H1 (cell line): ENCODE measurements at regions of chr14 and their contacts with region 1.

Region 1: GRCh38 chr14:58637391-58638230 is at the start of gene DACT1:
- DNase-seq: peak in 1 of 2 experiments; percentile 78
- H3K4me3 ChIP-seq: peak within 1 kb of the TSS; percentile 56 to 73 (median 64)
- H3K27ac ChIP-seq: no peak within 1 kb of the TSS
- H3K4me1 ChIP-seq: peaks cover 4 to 21% (median 13%) of the 10 kb centered on the region in 4 experiments
- H3K27me3 ChIP-seq: peaks cover 8 to 35% (median 22%) of the 10 kb centered on the region in 4 experiments; a peak in 6 of 7 replicates
- CTCF ChIP-seq: 0 out of 4 replicates have a peak, but pooled peaks of 1 of the 3 experiments have one; percentile 2
- EP300 ChIP-seq: no peak
- POLR2A ChIP-seq: no peak; a peak in 1 of 3 replicates
- RAD21 ChIP-seq: 0 out of 4 replicates have a peak, but pooled peaks of 1 of the 2 experiments have one; percentile 2
- total RNA-seq, gene DACT1: 26.2 and 29.8 TPM in 2 replicates

Region 2: DNA sequence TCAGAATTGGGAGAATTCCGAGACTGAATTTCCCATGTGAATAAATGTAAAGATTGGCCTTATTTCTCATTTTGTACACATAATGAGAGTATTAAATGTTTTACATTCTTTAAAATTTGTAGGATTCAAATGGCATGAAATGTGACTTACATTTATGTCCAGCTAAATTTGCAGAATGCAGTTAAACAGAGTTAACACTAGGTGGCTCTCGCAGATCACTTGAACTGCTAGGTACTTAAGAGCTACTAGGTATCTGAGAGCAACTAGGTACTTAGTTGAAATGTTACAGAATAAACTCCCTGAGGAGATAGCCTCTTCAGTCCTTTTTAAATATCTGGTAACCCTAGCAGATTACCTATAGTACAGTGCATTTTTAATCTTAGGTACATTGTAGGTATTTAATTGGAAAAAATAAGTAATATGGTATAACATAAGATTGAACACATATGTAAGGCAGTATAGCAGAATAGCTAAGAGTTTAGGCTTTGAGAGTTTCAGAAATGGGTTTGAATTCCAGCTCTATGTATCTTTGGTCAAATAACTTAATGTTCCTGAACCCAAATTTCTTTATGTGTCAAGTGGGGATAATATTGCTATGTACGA is 136.3 kb before region 1 on chr14:
- CTCF ChIA-PET with region 1: interaction called, 31 read pairs
- POLR2A ChIA-PET with region 1: no interaction called
- DNase-seq: no peak
- H3K4me3 ChIP-seq: no peak overlapping the region
- H3K27ac ChIP-seq: no peak overlapping the region
- H3K4me1 ChIP-seq: no peaks in the 10 kb centered on the region
- H3K27me3 ChIP-seq: no peaks in the 10 kb centered on the region
- CTCF ChIP-seq: peak in 2 of 3 experiments; percentile 71 to 83; a peak in 3 of 4 replicates
- EP300 ChIP-seq: no peak
- POLR2A ChIP-seq: no peak
- RAD21 ChIP-seq: peak; percentile 92 to 93

Region 3: GRCh38 chr14:58587271-58587670 is 50.3 kb before region 1 on chr14:
- CTCF ChIA-PET with region 1: interaction called, 11 read pairs
- POLR2A ChIA-PET with region 1: no interaction called
- DNase-seq: no peak
- H3K4me3 ChIP-seq: no peak overlapping the region
- H3K27ac ChIP-seq: no peak overlapping the region
- H3K4me1 ChIP-seq: no peaks in the 10 kb centered on the region
- H3K27me3 ChIP-seq: no peaks in the 10 kb centered on the region
- CTCF ChIP-seq: no peak
- EP300 ChIP-seq: no peak
- POLR2A ChIP-seq: no peak
- RAD21 ChIP-seq: no peak

Region 4: DNA sequence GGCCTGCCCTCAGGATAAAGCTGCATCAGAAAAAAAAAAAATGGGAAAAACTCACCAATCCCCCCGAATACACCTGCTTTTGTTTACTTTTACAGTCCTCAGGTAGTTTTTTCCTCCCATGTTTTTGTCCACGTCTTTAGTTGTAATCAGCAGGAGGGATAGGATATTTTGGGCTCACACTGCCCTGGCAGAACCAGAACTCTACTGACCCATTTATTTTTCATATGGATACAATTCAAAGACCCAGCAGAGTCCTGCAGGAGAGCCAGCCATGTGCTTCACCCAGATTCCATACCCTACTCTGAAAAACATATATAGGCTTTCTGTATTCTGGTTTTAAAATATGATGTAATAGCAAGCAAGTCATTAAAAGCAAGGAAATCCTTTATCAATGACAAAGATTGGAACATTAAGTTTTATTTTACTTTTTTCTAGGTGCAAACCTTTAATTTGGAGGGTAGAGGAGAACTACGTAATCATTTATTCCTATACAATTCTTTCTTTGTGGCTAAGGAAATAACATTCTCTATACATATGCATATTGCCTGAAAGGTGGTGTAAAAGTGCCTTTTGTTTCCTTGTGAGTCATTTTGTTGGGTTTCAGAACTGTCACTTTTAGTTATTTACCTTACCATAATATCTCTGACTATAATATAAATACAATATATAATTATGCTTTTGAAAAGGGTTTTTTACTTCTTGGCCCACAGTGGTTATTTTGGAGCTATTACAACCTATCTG is 19.2 kb after region 1 on chr14:
- CTCF ChIA-PET with region 1: interaction called, 34 read pairs
- POLR2A ChIA-PET with region 1: no interaction called
- DNase-seq: no peak
- H3K4me3 ChIP-seq: peak overlapping the region in 1 of 4 experiments; percentile 3; a peak in 1 of 8 replicates
- H3K27ac ChIP-seq: no peak overlapping the region
- H3K4me1 ChIP-seq: peaks cover 0 to 4% (median 0%) of the 10 kb centered on the region in 4 experiments; a peak in 3 of 7 replicates
- H3K27me3 ChIP-seq: no peaks in the 10 kb centered on the region
- CTCF ChIP-seq: no peak
- EP300 ChIP-seq: no peak
- POLR2A ChIP-seq: no peak
- RAD21 ChIP-seq: no peak

Region 5: GRCh38 chr14:58690801-58691516 is 53.3 kb after region 1 on chr14:
- CTCF ChIA-PET with region 1: no interaction called
- POLR2A ChIA-PET with region 1: no interaction called
- DNase-seq: peak in 1 of 2 experiments; percentile 29
- H3K4me3 ChIP-seq: no peak overlapping the region
- H3K27ac ChIP-seq: no peak overlapping the region
- H3K4me1 ChIP-seq: no peaks in the 10 kb centered on the region
- H3K27me3 ChIP-seq: no peaks in the 10 kb centered on the region
- CTCF ChIP-seq: no peak
- EP300 ChIP-seq: no peak
- POLR2A ChIP-seq: no peak
- RAD21 ChIP-seq: no peak

Region 6: DNA sequence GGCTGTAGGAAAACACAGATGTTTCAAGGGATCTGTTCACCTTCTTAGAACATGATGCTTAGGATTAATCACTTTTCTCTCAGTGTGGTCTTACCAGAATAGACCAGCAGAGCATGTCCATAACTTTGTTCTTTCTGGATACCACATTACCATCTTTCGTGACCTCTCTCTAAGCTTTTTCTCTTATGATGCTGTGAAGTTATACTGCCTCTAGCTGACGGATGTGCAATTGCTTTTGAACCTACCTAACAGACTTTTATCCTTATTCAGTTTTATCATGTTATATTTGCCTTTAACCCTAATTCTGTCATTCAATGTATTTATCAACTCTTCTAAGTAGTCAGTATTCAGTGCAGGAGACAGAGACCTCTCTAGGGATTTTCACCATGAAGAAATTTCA is 246.8 kb after region 1 on chr14:
- CTCF ChIA-PET with region 1: interaction called, 10 read pairs
- POLR2A ChIA-PET with region 1: no interaction called
- DNase-seq: no peak
- H3K4me3 ChIP-seq: no peak overlapping the region
- H3K27ac ChIP-seq: no peak overlapping the region
- H3K4me1 ChIP-seq: no peaks in the 10 kb centered on the region
- H3K27me3 ChIP-seq: no peaks in the 10 kb centered on the region
- CTCF ChIP-seq: peak in 2 of 3 experiments; percentile 18 to 65; a peak in 2 of 4 replicates
- EP300 ChIP-seq: no peak
- POLR2A ChIP-seq: no peak
- RAD21 ChIP-seq: peak; percentile 46 to 51